ENCODE measurements at regions of chr3 and their contacts with region 1.

Region 1: DNA sequence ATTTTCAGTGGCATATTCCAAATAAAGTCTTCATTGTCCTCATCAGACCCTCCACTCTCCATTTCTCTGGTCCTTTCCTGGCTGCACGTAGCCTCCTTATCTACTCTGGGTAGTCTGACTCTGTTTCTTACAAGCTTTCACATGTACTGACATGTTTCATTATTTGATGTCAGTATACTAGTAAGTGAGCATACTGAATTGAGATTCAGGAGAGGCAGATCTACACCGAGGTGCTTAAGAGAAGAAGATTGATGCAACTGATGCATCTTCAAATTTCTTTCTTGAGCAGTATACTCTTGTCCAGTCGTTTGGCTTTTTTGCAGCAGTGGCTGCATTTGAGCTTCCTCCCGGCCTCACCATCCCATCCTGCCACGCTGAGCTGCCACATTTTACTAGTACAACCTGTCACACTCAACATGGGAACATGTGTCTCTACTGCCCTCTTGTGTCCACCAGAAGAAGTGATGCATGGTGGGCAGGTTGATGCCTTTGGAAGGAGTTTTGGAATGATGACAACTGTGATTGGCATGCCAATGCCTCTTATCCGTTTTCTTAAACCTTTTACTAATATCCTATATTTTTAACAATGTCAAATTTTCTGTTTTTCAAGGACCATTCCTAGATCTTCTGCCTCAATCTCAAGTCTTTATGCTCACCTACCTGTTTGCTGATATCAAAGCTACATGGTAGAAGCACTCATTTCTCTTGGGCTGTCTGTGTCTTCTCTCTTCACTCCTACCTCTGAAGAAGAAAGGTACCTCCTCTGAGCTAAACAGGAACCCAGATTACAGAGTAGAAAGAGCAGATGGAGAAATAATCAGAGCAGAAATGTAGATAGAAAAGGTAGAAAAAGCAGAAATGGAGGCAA is 38.7 kb downstream of the GUCA1C start:
- DNase-seq: no peak

Region 2: DNA sequence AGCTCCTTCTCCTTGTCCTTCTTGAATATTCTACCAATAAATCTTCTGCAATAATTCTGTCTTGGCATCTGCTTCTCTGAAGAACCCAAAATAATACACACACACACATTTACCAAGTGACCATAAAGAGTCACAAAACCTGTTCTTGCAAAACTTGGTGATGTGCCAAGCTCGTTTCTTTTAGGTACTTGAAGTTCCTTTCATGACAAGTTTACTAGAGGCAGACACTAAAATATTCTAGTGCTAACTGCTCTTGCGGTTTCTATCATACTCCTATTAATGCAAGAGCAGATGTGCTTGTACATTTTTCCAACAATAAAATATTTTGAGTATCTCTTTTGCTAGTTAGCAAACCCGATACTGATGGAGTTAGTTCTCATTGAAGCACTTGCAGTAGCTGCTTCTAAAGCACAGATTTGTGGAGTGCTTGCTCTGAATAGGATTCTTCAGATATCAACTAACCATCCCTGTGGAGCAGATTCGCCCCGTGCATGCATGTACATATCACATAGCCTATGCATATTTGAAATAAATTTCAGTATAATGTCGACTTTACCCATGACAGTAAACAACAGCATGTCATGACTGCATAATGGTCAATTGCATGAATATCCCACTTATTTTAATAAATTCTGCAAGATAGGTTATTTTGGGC is 595.5 kb before region 1 on chr3:
- intact Hi-C with region 1: loop called in 1 of 2 experiments (anchors 5 kb)
- DNase-seq: no peak

Region 3: DNA sequence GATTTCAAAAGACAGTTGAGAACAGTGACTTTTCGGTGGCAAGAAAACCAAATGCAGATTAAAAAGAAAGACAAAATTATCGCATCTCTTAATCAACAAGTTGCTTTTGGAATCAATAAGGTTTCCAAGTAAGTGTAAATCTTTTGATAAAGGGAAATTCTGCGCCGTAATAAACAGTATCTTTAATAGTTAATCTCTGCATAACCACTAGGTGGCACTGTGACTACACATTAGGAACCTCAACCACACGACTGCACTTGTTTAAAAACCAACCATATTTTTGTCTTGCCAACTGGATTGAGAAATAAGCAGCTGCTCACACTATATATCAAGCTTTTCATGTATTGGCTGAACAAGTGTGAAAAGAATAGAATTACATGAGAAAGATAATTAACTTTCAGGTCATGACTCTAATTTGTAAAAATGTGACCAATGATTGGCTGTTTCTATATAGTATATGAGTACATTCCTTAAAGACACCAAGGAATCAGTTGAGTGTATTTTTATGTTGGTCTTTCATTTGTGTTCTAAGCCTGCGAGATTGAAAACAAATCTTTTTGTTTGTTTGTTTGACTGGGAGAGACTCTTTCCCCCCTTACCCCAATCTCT is 252.8 kb before region 1 on chr3:
- intact Hi-C with region 1: loop called in 1 of 2 experiments (anchors 10 kb)
- DNase-seq: no peak

Measured in posterior vena cava (tissue), 2 donors.